ENCODE measurements at regions of chr3 and their contacts with region 1.

Region 1: DNA sequence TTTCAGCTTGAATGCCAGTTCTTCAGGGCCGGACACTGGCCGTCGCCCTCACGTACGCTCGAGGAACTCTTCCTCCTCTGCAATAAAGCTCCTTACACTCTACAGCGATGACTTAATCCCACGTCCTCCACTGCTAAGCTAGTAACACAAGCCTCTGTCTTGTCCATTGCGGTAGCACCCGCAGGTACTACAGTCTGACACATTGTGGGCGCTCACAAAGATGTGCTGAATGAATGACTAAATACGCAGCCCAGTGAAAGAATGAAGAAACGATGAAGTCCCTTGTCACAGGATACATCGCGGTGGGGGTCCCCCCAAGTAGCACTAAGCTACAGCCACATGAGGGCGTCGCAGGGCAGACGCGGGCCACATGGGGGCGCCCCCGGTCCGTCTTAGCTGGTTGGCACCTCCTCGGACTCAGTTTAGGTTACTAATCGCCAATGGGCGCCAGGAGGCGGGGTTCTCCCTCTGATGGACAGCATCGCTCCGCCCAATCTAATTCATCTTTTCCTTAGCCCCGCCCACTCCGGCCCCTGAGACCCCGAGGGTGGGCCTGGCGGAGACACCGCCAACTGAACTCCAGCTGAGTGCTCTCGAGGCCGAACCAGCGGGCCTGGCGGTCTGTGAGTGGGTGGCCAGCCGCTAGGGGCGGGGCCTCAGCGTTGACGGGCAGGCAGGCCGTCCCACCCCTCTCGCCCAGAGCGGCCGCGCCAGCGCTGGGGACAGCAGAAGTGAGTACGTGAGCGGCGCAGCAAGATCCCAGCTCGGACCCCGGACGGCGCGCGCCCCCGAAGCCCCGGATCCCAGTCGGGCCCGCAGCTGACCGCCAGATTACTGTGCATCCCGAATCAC is at the start of gene EPHB3:
- DNase-seq: peak; percentile 99
- H3K4me3 ChIP-seq: peak within 1 kb of the TSS in 1 of 3 experiments; percentile 16
- H3K27ac ChIP-seq: no peak within 1 kb of the TSS
- H3K4me1 ChIP-seq: peaks cover 4% of the 10 kb centered on the region
- H3K27me3 ChIP-seq: peaks cover 44 to 55% of the 10 kb centered on the region in 2 experiments
- CTCF ChIP-seq: peak; percentile 98 to 99
- POLR2A ChIP-seq: no peak
- total RNA-seq, gene EPHB3: not detected in 2 replicates

Region 2: GRCh38 chr3:184543843-184544512 is 17.3 kb before region 1 on chr3:
- CTCF ChIA-PET with region 1: interaction called, 16 read pairs
- POLR2A ChIA-PET with region 1: no interaction called
- dilution Hi-C with region 1: no loop called
- intact Hi-C with region 1: no loop called
- DNase-seq: peak; percentile 70
- H3K4me3 ChIP-seq: no peak overlapping the region
- H3K27ac ChIP-seq: no peak overlapping the region
- H3K4me1 ChIP-seq: no peaks in the 10 kb centered on the region
- H3K27me3 ChIP-seq: peaks cover 5 to 6% of the 10 kb centered on the region in 2 experiments
- CTCF ChIP-seq: peak; percentile 69 to 85
- POLR2A ChIP-seq: no peak

Region 3: GRCh38 chr3:184583578-184584425 is 22.5 kb after region 1 on chr3:
- CTCF ChIA-PET with region 1: interaction called, 10 read pairs
- POLR2A ChIA-PET with region 1: no interaction called
- dilution Hi-C with region 1: no loop called
- intact Hi-C with region 1: no loop called
- DNase-seq: no peak
- H3K4me3 ChIP-seq: peak overlapping the region in 1 of 3 experiments; percentile 23
- H3K27ac ChIP-seq: no peak overlapping the region
- H3K4me1 ChIP-seq: peaks cover 5% of the 10 kb centered on the region
- H3K27me3 ChIP-seq: peaks cover 18 to 32% of the 10 kb centered on the region in 2 experiments
- CTCF ChIP-seq: peak; percentile 17 to 23
- POLR2A ChIP-seq: no peak

Region 4: GRCh38 chr3:184716622-184717398 is 155.5 kb after region 1 on chr3:
- CTCF ChIA-PET with region 1: interaction called, 11 read pairs
- POLR2A ChIA-PET with region 1: no interaction called
- dilution Hi-C with region 1: no loop called
- intact Hi-C with region 1: loop called (anchors 1 kb)
- DNase-seq: no peak
- H3K4me3 ChIP-seq: no peak overlapping the region
- H3K27ac ChIP-seq: no peak overlapping the region
- H3K4me1 ChIP-seq: no peaks in the 10 kb centered on the region
- H3K27me3 ChIP-seq: peaks cover 3 to 7% of the 10 kb centered on the region in 2 experiments
- CTCF ChIP-seq: no peak
- POLR2A ChIP-seq: no peak

Region 5: GRCh38 chr3:184777336-184778004 is 216.2 kb after region 1 on chr3:
- CTCF ChIA-PET with region 1: no interaction called
- POLR2A ChIA-PET with region 1: interaction called, 3 read pairs
- dilution Hi-C with region 1: no loop called
- intact Hi-C with region 1: loop called (anchors 1 kb)
- DNase-seq: peak; percentile 85
- H3K4me3 ChIP-seq: no peak overlapping the region
- H3K27ac ChIP-seq: no peak overlapping the region
- H3K4me1 ChIP-seq: no peaks in the 10 kb centered on the region
- H3K27me3 ChIP-seq: peaks cover 0 to 12% of the 10 kb centered on the region in 2 experiments
- CTCF ChIP-seq: peak; percentile 67 to 75
- POLR2A ChIP-seq: no peak

Region 6: DNA sequence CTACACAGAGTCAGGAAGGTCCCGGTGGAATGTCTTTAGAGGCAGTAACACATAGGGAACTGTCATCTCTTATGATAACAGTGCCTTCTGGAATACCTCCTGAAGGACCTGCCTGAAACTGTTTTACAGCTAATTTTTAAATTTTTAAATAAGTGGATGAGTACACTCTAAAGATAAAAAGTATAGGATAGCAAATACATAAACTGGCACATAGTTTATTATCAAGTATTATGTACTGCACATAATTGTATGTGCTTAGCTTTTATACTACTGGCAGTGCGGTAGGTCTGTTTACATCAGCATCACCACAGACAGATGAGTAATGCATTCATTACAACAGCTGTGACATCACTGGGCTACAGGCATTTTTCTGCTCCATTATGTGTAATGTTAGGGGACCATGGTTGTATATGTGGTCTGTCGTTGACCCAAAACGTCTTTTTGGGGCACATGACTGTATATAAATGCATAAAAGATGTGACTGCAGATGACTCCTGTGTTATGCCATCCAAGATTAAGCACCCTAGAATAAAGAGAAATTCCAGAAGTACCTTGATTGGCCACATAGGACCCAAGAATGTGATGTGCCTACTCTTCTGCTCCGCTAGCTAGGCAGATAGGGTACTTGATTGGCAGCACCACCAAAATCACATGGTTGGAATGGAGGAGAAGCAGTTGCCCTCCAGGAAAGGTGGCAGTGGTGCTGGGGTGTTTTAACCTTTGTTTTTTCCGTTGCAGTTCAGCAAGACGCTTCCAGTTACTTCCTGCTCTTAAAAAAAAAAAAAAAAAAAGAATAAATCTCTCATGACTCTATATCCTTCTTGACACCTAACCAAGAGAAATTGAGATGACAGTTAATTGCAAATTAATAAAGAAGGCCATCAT is 254.0 kb after region 1 on chr3:
- CTCF ChIA-PET with region 1: no interaction called
- POLR2A ChIA-PET with region 1: no interaction called
- dilution Hi-C with region 1: no loop called
- intact Hi-C with region 1: no loop called
- DNase-seq: no peak
- H3K4me3 ChIP-seq: no peak overlapping the region
- H3K27ac ChIP-seq: no peak overlapping the region
- H3K4me1 ChIP-seq: peaks cover 25% of the 10 kb centered on the region
- H3K27me3 ChIP-seq: no peaks in the 10 kb centered on the region
- CTCF ChIP-seq: no peak
- POLR2A ChIP-seq: no peak

Region 7: GRCh38 chr3:185308126-185308754 is 747.0 kb after region 1 on chr3:
- CTCF ChIA-PET with region 1: interaction called, 14 read pairs
- POLR2A ChIA-PET with region 1: no interaction called
- dilution Hi-C with region 1: no loop called
- intact Hi-C with region 1: loop called (anchors 1 kb)
- DNase-seq: peak; percentile 68
- H3K4me3 ChIP-seq: no peak overlapping the region
- H3K27ac ChIP-seq: no peak overlapping the region
- H3K4me1 ChIP-seq: no peaks in the 10 kb centered on the region
- H3K27me3 ChIP-seq: no peaks in the 10 kb centered on the region
- CTCF ChIP-seq: peak; percentile 64 to 77
- POLR2A ChIP-seq: no peak